RWPE1 (cell line): ENCODE measurements at regions of chr4 and their contacts with region 1.

Region 1: GRCh38 chr4:7929118-7929951 is 10.3 kb downstream of the AFAP1 start:
- DNase-seq: peak; percentile 81
- H3K27ac ChIP-seq: peak overlapping the region; percentile 77
- CTCF ChIP-seq: no peak

Region 2: DNA sequence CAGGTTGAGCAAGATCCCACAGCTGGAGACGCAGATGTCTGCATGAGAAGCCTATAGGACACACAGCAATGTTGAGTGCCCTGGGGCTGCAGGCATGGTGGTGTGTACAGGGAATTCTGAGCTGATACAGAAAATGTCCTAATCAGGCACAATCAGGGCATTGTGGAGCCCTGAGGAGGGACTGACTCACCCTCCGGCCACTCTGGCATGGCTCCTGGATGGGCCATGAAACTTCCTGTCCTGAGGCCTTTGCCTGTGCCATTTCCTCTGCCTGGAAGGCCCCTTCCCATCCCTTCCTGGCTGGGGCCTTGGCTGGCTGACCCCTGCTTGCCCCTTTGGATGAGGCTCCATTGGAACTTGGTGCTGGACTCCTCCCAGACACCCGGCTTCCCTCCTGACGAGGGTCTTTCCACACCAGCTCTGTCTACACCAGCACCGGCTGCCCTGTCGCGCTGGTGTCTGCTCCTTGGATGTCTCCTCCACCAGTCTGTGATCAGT is 27.0 kb after region 1 on chr4:
- CTCF ChIA-PET with region 1: no interaction called
- POLR2A ChIA-PET with region 1: interaction called, 13 read pairs
- DNase-seq: peak; percentile 47
- H3K27ac ChIP-seq: peak overlapping the region; percentile 77
- CTCF ChIP-seq: no peak

Region 3: DNA sequence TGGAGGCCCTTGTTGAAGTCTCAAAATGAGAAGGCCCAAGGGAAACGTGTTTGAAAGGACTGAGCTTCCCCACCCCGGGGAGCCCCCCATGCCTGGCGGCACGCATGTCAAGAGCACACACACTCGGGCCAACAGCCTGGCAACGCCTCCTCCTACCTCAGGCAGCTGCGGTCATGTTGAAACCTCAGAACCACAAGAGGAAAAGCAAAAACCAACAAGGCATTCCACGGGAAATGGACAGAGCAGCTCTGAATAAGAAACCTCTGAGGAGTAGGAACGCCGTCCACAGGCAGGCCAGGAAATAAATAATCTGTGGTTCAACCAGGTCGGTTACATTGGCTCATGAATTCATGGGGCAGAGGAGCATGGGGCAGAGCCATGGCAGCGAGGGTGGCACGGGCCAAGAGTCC is 106.0 kb after region 1 on chr4:
- CTCF ChIA-PET with region 1: no interaction called
- POLR2A ChIA-PET with region 1: no interaction called
- DNase-seq: no peak
- H3K27ac ChIP-seq: no peak overlapping the region
- CTCF ChIP-seq: no peak